Endothelial cell of umbilical vein (primary cell): ENCODE measurements at regions of chr14 and their contacts with region 1.

Region 1: DNA sequence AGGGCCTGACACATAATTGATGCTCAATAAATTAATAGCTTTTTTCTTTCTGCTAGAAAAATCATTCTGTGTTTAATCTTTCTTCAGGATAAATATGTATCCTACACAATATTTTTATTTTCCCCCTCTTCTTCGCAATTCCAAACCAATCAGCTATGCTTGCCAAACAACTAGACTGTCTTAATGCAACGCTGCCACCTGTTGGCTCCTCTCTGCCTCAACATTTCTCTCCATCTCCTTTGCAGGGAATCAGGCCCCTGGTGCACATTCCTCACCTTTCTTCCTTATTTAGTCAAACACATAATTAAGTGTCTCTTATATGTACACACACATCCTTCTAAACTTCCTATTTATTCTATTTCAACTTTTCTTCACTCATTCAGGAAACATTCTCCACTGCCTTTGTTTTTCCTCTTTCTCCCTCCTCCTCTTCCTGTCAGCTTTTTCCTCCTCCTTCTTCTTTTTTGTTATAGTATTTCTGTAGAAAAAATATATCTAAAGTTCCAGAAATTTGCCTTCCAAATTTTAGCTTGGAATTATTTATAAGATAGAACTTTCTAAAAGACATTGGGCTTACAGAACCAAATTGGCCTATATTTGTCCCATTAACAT is 406.0 kb downstream of the PRKD1 start:
- DNase-seq: peak; percentile 6
- H3K4me3 ChIP-seq: no peak overlapping the region
- H3K27ac ChIP-seq: no peak overlapping the region
- H3K4me1 ChIP-seq: no peaks in the 10 kb centered on the region
- H3K27me3 ChIP-seq: no peaks in the 10 kb centered on the region
- CTCF ChIP-seq: peak; percentile 28 to 42
- POLR2A ChIP-seq: no peak

Region 2: DNA sequence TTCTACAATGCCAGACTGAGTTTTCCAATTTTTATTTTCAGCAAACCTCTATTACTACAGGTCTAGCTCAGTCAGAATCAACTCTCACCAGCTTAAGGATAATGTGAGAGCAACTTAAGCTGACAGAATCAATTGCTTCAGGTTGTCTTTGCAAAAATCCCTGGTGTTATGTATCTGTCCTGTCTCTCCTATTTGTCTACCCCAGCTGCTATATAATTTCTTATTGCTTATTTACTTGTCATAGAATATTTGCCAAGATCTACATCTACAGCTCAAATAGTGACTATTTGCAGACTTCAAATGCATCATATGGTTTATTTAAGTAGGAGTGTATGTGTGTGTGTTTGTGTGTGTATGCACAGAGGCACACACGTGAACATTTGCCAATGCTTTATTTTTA is 701.0 kb before region 1 on chr14:
- CTCF ChIA-PET with region 1: no interaction called
- POLR2A ChIA-PET with region 1: no interaction called
- dilution Hi-C with region 1: no loop called
- intact Hi-C with region 1: no loop called
- DNase-seq: no peak
- H3K4me3 ChIP-seq: no peak overlapping the region
- H3K27ac ChIP-seq: no peak overlapping the region
- H3K4me1 ChIP-seq: no peaks in the 10 kb centered on the region
- H3K27me3 ChIP-seq: no peaks in the 10 kb centered on the region
- CTCF ChIP-seq: no peak
- POLR2A ChIP-seq: no peak

Region 3: GRCh38 chr14:29222671-29223268 is 298.9 kb before region 1 on chr14:
- CTCF ChIA-PET with region 1: no interaction called
- POLR2A ChIA-PET with region 1: no interaction called
- dilution Hi-C with region 1: no loop called
- intact Hi-C with region 1: loop called (anchors 2 kb)
- DNase-seq: peak; percentile 44
- H3K4me3 ChIP-seq: no peak overlapping the region
- H3K27ac ChIP-seq: no peak overlapping the region
- H3K4me1 ChIP-seq: no peaks in the 10 kb centered on the region
- H3K27me3 ChIP-seq: no peaks in the 10 kb centered on the region
- CTCF ChIP-seq: peak; percentile 43 to 52
- POLR2A ChIP-seq: no peak